HEK293 (cell line): ENCODE measurements at regions of chr6 and their contacts with region 1.

Region 1: GRCh38 chr6:155174576-155175211 is 89.1 kb upstream of the CLDN20 start:
- H3K4me3 ChIP-seq: no peak overlapping the region
- H3K27ac ChIP-seq: no peak overlapping the region
- H3K4me1 ChIP-seq: peaks cover 13% of the 10 kb centered on the region
- CTCF ChIP-seq: peak; percentile 62; the same call in 1 of the 2 replicates

Region 2: GRCh38 chr6:154923199-154923869 is 251.4 kb before region 1 on chr6:
- CTCF ChIA-PET with region 1: interaction called, 75 read pairs
- POLR2A ChIA-PET with region 1: no interaction called
- H3K4me3 ChIP-seq: no peak overlapping the region
- H3K27ac ChIP-seq: no peak overlapping the region
- H3K4me1 ChIP-seq: no peaks in the 10 kb centered on the region
- CTCF ChIP-seq: no peak

Region 3: GRCh38 chr6:154928325-154928922 is 246.3 kb before region 1 on chr6:
- CTCF ChIA-PET with region 1: interaction called, 75 read pairs
- POLR2A ChIA-PET with region 1: no interaction called
- H3K4me3 ChIP-seq: no peak overlapping the region
- H3K27ac ChIP-seq: no peak overlapping the region
- H3K4me1 ChIP-seq: peaks cover 6% of the 10 kb centered on the region; the same call in 1 of the 2 replicates
- CTCF ChIP-seq: peak; percentile 60

Region 4: GRCh38 chr6:155106456-155107115 is 68.1 kb before region 1 on chr6:
- CTCF ChIA-PET with region 1: no interaction called
- POLR2A ChIA-PET with region 1: no interaction called
- H3K4me3 ChIP-seq: no peak overlapping the region
- H3K27ac ChIP-seq: no peak overlapping the region
- H3K4me1 ChIP-seq: 0 out of 2 replicates have a peak, but pooled peaks cover 3% of the 10 kb centered on the region
- CTCF ChIP-seq: no peak

Region 5: DNA sequence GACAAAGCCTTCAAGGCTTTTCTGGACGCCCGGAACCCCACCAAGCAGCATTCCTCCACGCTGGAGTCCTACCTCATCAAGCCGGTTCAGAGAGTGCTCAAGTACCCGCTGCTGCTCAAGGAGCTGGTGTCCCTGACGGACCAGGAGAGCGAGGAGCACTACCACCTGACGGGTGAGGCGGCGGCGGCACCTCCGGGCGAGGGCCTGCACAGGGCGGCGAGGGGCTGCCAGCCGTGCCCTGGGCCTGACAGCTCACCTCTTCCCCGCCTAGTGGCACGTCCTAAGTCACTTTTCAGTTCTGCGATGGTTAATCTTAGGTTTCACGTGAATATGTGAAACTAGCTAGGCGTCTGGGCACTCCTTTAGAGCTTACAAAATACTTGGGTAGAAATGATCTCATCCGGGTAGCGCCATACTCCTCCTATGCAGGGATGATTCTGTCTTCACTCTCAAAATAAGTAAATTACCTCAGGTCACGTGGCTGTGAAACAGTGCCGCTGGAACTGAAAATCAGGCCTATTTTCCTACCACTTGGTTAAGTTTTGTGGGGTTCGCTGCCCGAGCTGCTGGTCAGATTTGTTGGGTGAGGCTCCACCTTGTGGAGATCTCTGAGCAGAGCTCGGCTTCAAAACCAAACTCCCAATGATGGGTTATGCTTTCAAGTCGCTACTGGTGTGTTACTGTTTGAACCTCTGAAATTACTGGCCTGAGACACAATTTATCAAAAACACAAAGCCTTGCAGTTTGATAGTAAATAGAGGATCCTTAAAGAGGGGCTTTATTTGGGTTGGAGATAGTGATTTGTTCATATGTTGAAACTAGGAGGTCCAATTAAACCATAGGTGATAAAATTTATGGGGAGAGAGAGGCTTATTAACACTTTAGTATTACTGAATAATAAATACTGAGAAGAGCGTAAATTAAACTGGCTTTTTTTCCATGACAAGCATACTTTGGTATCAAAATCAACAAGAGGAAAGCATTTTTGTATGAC is 73.6 kb after region 1 on chr6:
- CTCF ChIA-PET with region 1: interaction called, 28 read pairs
- POLR2A ChIA-PET with region 1: no interaction called
- H3K4me3 ChIP-seq: no peak overlapping the region
- H3K27ac ChIP-seq: no peak overlapping the region
- H3K4me1 ChIP-seq: no peaks in the 10 kb centered on the region
- CTCF ChIP-seq: peak; percentile 55; the same call in 1 of the 2 replicates

Region 6: DNA sequence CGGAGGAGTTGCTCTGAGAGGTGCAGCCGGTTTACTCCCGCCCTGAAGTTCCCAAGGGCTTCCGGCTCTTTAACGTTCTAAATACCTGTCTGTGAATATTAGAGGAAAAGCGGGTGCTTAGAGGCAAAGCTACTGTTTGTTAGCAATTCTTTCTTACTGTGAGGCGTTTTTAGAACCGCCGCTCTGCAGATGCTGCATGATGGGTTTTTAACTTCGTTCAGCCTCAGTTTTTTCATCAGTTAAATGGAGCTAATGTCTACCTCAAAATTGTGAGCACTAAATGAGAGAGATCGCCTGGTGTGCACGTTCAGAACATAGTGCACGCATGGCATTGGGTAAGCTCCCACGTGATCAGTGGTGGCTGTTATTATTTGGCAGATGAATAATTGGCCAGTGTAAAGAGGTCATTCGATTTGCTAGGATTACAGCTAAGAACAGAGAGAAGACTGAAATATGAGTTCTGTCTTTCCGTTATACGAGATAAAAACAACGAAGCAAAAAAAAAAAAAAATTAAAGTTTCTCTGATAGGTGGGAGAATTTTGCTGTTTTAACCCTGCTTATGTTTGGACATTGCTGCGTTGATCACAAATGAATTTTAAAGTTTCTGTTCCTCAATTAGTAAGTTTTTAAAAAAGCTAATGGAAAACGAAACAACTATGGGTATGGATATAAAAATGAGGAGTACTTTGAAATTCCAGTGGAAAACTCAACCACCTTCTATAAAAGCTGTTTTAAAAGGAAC is 140.2 kb after region 1 on chr6:
- CTCF ChIA-PET with region 1: interaction called, 22 read pairs
- POLR2A ChIA-PET with region 1: no interaction called
- H3K4me3 ChIP-seq: peak overlapping the region; percentile 57
- H3K27ac ChIP-seq: peak overlapping the region; percentile 33; the same call in 1 of the 2 replicates
- H3K4me1 ChIP-seq: peaks cover 5% of the 10 kb centered on the region; the same call in 1 of the 2 replicates
- CTCF ChIP-seq: no peak